ENCODE measurements at regions of chr9 and their contacts with region 1.

Region 1: DNA sequence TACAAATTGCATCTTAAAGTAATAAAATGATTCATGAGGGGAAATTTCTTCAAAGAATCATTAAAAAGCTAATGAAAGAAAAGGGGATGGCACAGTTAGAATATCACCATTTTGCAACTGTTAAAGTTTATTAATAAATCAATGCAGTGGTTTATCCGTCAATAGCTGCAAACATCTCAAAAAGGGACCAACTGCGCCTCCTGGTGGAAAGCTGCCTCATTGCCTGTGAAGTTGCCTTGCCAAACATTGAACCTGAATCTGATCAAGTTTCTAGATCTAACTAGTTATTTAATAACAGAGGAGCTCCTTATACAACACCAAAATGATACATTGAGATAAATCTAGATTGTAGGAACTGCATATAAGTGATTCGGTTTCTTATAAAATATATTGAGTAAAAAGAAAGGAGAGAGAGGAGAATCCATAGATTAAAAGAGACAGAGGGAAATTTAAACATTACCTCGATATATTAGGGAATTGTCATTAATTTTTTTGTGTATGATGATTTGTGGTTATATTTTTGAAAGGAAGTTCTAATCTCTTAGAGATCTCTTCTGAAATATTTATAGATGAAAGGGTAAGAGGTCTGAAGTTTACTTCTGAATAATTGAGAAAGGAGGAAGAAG is 6.9 kb upstream of the NDUFB6 start:
- DNase-seq: peak; percentile 57 to 66
- H3K4me3 ChIP-seq: no peak overlapping the region
- H3K27ac ChIP-seq: no peak overlapping the region
- H3K4me1 ChIP-seq: no peaks in the 10 kb centered on the region
- H3K27me3 ChIP-seq: no peaks in the 10 kb centered on the region
- CTCF ChIP-seq: peak; percentile 63 to 82 (median 81)
- POLR2A ChIP-seq: no peak

Region 2: DNA sequence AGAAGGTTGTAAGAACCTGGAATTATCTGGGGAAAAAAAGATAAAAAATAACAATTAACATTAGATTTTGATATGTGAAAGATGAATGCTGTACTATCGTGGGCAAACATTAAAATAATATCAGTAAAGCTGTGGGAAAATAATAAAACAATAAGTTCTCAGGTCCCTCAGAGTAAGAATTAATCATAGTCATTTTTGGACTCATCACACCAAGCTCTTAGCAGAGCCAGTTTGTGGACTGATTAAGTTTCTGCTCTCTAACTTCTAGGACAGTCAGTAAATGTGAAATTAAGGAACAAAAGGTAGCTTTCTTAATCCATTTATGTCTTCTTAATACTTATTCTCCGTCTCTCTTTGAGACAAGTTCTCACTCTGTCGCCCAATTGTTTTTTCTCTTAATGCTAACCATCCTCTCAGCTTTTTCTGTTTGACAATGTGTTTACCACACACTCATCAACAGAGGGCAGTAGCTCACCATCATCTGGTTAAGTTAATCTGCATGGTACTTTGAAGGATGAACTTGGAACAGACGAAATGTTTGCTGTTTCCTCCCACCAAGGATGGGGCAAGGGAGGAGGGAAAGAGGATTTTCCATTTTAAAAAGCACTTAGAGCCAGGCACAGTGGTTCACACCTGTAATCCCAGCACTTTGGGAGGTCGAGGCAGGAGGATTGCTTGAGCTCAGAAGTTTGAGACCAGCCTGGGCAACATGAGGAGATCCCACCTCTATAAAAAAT is 200.7 kb before region 1 on chr9:
- intact Hi-C with region 1: loop called (anchors 5 kb)
- DNase-seq: no peak
- H3K4me3 ChIP-seq: no peak overlapping the region
- H3K27ac ChIP-seq: no peak overlapping the region
- H3K4me1 ChIP-seq: no peaks in the 10 kb centered on the region
- H3K27me3 ChIP-seq: no peaks in the 10 kb centered on the region
- CTCF ChIP-seq: peak; percentile 54 to 77 (median 73)
- POLR2A ChIP-seq: no peak

Region 3: DNA sequence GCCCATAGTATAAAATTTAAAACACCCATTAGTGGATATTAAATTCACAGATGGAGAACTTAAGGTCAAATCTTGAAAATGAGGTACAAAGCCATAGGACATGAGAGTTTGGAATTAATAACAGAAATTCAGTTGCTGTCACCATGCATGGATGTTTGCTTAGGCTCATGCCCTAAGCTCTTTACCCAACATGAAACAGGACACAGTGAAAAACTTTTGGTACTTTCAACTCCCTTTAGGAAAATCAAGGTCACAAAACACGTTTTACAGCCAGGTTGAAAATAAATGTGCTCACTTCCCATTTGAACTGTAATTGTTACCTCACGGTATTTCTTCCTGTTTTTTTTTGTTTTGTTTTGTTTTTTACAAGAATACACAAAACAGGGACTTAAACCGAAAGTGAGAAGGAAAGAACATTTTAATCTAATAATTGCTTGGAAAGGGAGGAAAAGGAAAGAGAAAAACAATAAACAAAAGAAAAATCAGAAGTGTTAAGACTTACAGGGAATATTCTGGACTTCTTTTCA is 21.3 kb before region 1 on chr9:
- intact Hi-C with region 1: no loop called
- DNase-seq: no peak
- H3K4me3 ChIP-seq: no peak overlapping the region
- H3K27ac ChIP-seq: no peak overlapping the region
- H3K4me1 ChIP-seq: no peaks in the 10 kb centered on the region
- H3K27me3 ChIP-seq: no peaks in the 10 kb centered on the region
- CTCF ChIP-seq: no peak
- POLR2A ChIP-seq: no peak

Region 4: GRCh38 chr9:32954642-32955041 is 374.8 kb after region 1 on chr9:
- intact Hi-C with region 1: loop called (anchors 10 kb)
- DNase-seq: no peak
- H3K4me3 ChIP-seq: no peak overlapping the region
- H3K27ac ChIP-seq: no peak overlapping the region
- H3K4me1 ChIP-seq: no peaks in the 10 kb centered on the region
- H3K27me3 ChIP-seq: no peaks in the 10 kb centered on the region
- CTCF ChIP-seq: no peak
- POLR2A ChIP-seq: no peak